Esophagus squamous epithelium (tissue), 5 donors: ENCODE measurements at regions of chr22 and their contacts with region 1.

Region 1: GRCh38 chr22:30326706-30327362 is at the start of gene TBC1D10A:
- DNase-seq: peak; percentile 63
- H3K4me3 ChIP-seq: peak within 1 kb of the TSS; percentile 94 to 100 (median 98)
- H3K27ac ChIP-seq: peak within 1 kb of the TSS; percentile 96 to 99 (median 99)
- H3K4me1 ChIP-seq: peaks cover 32 to 60% (median 36%) of the 10 kb centered on the region in 3 donors
- H3K27me3 ChIP-seq: no peaks in the 10 kb centered on the region
- CTCF ChIP-seq: peak in 1 of 6 experiments; percentile 2
- POLR2A ChIP-seq: peak in 3 of 4 donors; percentile 79 to 97 (median 94)
- total RNA-seq, gene TBC1D10A: 40.7 to 55.1 (median 47.0) TPM

Region 2: GRCh38 chr22:30289134-30289979 is 37.5 kb before region 1 on chr22 and contains the start of gene CASTOR1:
- intact Hi-C with region 1: loop called (anchors 5 kb)
- DNase-seq: peak; percentile 82
- H3K4me3 ChIP-seq: peak within 1 kb of the TSS; percentile 66 to 99 (median 82)
- H3K27ac ChIP-seq: peak within 1 kb of the TSS; percentile 96 to 99 (median 97)
- H3K4me1 ChIP-seq: peaks cover 50 to 78% (median 56%) of the 10 kb centered on the region in 3 donors
- H3K27me3 ChIP-seq: no peaks in the 10 kb centered on the region
- CTCF ChIP-seq: no peak
- POLR2A ChIP-seq: peak in 3 of 4 donors; percentile 55 to 81 (median 77)
- total RNA-seq, gene CASTOR1: 18.9 to 76.4 (median 40.7) TPM